ENCODE measurements at regions of chr1 and their contacts with region 1.

Region 1: DNA sequence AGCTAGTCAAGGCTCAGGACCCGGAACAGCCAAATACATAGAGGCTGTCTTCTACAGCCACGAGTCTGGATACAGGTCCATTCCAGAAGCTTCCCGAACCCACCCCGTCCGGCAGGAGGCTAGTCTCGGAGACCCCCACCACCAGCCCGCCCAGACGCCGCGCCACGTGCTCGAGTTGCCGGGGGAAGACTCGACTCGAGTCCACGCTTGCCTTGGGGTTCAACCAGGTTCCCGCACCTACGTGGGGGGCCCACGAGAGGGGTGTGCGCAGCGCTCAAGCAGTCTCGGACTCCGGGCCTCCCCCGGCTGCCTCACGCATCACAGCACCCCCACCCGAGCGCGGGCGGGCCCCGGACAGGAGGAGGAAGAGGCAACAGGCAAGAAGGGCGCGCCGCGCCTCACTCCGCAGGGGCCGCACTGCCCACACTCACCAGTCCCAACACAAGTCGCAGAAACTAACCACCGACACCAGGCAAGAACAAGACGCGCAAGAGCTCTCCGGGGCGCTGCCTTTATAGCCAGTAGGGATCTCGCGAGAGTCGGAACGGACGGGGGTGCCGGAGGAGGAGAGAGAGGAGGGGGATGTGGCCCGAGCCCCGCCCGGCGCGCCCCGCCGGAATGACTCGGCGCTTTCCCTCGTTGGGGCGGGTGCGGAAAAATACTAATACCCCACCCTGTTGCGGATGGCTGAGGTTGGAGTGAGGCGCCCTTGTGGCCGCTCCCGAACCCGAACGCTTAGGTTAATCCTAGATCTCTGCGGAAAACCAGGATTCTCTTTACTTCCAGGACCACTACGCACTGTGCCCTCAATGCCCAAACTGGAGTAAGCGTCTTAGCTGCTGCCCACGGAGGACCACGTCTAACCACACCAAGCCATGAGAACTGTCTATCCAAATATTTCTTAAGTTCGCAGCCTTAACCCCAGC is at the start of gene PRDX1:
- DNase-seq: peak; percentile 67
- H3K4me3 ChIP-seq: peak within 1 kb of the TSS; percentile 95
- CTCF ChIP-seq: peak; percentile 22

Region 2: DNA sequence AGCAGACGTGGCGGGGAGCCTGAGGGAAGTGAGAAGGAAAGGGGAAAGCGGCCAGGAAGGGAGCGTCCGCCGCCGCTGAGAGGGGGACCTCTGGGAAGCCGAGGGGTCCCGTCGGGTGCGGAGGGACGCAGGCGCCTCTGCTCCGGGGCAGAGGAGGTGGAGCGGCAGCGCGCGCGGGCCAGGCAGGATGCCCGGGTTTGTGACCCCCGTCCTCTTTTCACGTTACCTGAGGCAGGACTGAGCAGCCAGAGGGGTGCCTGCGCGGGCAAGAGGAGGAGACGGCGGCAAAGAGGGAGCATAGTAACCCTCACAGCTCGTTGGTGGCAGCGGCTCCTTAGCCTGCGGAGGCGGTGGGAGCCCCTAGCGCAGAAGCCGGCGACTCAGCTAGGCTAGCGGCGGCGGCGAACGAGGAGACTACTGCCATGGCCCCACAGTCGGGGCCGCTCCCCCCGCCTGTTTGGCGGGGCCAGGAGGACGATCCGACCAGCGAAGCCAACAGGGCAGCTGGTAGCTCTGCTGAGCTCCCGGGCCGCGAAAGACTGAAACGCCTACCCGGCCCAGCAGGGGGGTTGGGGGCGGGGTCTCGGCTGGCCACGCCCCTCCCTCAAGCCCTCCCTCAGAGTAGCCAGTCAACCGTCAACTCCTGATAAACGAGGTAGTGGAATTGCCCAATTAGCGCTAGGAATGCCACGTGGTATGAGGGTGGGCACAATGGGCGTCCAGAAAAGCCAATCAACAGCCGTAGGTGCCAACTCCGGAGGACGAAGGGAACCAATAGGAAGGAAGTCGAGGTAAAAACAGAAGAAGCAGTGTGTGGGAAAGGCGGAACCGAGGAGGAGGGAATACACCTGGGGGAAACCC is 30.8 kb before region 1 on chr1 and contains the start of gene TESK2:
- CTCF ChIA-PET with region 1: interaction called, 3 read pairs
- POLR2A ChIA-PET with region 1: interaction called, 21 read pairs
- DNase-seq: peak; percentile 94
- H3K4me3 ChIP-seq: peak within 1 kb of the TSS; percentile 91
- CTCF ChIP-seq: peak; percentile 16

Region 3: GRCh38 chr1:45535988-45536766 is 14.5 kb after region 1 on chr1:
- CTCF ChIA-PET with region 1: interaction called, 4 read pairs
- POLR2A ChIA-PET with region 1: interaction called, 15 read pairs
- DNase-seq: no peak
- H3K4me3 ChIP-seq: no peak overlapping the region
- CTCF ChIP-seq: no peak

Region 4: GRCh38 chr1:45550401-45551351 is 29.0 kb after region 1 on chr1 and contains the start of gene AKR1A1:
- CTCF ChIA-PET with region 1: interaction called, 3 read pairs
- POLR2A ChIA-PET with region 1: interaction called, 54 read pairs
- DNase-seq: peak; percentile 21
- H3K4me3 ChIP-seq: peak within 1 kb of the TSS; percentile 92
- CTCF ChIP-seq: no peak

Region 5: GRCh38 chr1:45583264-45583665 is 61.6 kb after region 1 on chr1:
- CTCF ChIA-PET with region 1: no interaction called
- POLR2A ChIA-PET with region 1: interaction called, 40 read pairs
- DNase-seq: peak; percentile 74
- H3K4me3 ChIP-seq: peak overlapping the region; percentile 96
- CTCF ChIP-seq: no peak

Measured in AG04449 (cell line).